CD4-positive, alpha-beta T cell (primary cell): ENCODE measurements at regions of chr12 and their contacts with region 1.

Region 1: GRCh38 chr12:116277393-116278278 is at the start of gene MED13L:
- DNase-seq: peak; percentile 77 to 95 (median 88)
- ATAC-seq: peak; percentile 81
- H3K4me3 ChIP-seq: peak within 1 kb of the TSS; percentile 92
- H3K4me3 Mint-ChIP-seq: peak within 1 kb of the TSS; percentile 95
- H3K27ac ChIP-seq: peak within 1 kb of the TSS; percentile 9 to 13
- H3K27ac Mint-ChIP-seq: peak within 1 kb of the TSS; percentile 94
- H3K4me1 ChIP-seq: peaks cover 12% of the 10 kb centered on the region
- H3K4me1 Mint-ChIP-seq: peaks cover 43% of the 10 kb centered on the region
- H3K27me3 ChIP-seq: no peaks in the 10 kb centered on the region
- H3K27me3 Mint-ChIP-seq: no peaks in the 10 kb centered on the region
- CTCF ChIP-seq: no peak
- total RNA-seq, gene MED13L: 203 to 208 TPM

Region 2: GRCh38 chr12:116180448-116180847 is 97.2 kb before region 1 on chr12:
- CTCF ChIA-PET with region 1: no interaction called
- POLR2A ChIA-PET with region 1: no interaction called
- intact Hi-C with region 1: no loop called
- DNase-seq: no peak
- ATAC-seq: no peak
- H3K4me3 ChIP-seq: no peak overlapping the region
- H3K4me3 Mint-ChIP-seq: no peak overlapping the region
- H3K27ac ChIP-seq: no peak overlapping the region
- H3K27ac Mint-ChIP-seq: no peak overlapping the region
- H3K4me1 ChIP-seq: peaks cover 7% of the 10 kb centered on the region
- H3K4me1 Mint-ChIP-seq: peaks cover 92% of the 10 kb centered on the region
- H3K27me3 ChIP-seq: no peaks in the 10 kb centered on the region
- H3K27me3 Mint-ChIP-seq: no peaks in the 10 kb centered on the region
- CTCF ChIP-seq: no peak

Region 3: DNA sequence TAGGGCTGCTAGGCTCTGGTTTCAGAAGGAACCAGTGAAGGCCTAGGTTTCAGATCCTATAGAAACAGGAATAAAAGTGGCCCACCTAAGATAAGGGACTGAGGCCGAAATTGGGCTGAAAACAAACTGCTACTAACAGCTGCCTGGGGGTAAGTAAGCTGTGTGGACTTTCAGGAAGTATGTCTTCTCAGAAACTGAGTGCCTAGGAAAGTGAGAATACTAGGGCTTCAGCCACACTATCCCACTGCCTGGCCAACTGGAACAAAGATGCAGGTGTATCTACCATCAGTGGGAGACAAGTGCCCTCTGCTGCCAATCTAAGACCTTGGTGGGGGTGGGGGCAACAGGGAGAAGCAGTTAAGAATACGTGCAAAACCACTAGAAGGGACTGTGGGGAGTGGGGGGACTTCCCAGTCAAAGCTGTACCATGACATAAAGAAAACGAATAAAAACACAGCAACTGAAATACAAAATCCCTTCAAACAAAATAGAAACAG is 82.7 kb before region 1 on chr12:
- CTCF ChIA-PET with region 1: no interaction called
- POLR2A ChIA-PET with region 1: no interaction called
- intact Hi-C with region 1: loop called in 1 of 2 experiments (anchors 5 kb)
- DNase-seq: peak in 13 of 14 experiments; percentile 3 to 85 (median 30)
- ATAC-seq: peak; percentile 95
- H3K4me3 ChIP-seq: no peak overlapping the region
- H3K4me3 Mint-ChIP-seq: peak overlapping the region; percentile 47
- H3K27ac ChIP-seq: no peak overlapping the region
- H3K27ac Mint-ChIP-seq: peak overlapping the region; percentile 40
- H3K4me1 ChIP-seq: peaks cover 21% of the 10 kb centered on the region
- H3K4me1 Mint-ChIP-seq: peaks cover 69% of the 10 kb centered on the region
- H3K27me3 ChIP-seq: no peaks in the 10 kb centered on the region
- H3K27me3 Mint-ChIP-seq: no peaks in the 10 kb centered on the region
- CTCF ChIP-seq: no peak

Region 4: GRCh38 chr12:116244001-116244400 is 33.6 kb before region 1 on chr12:
- CTCF ChIA-PET with region 1: interaction called, 6 read pairs
- POLR2A ChIA-PET with region 1: interaction called, 5 read pairs
- intact Hi-C with region 1: loop called (anchors 5 kb)
- DNase-seq: peak in 4 of 14 experiments; percentile 19 to 43 (median 29)
- ATAC-seq: peak; percentile 67
- H3K4me3 ChIP-seq: no peak overlapping the region
- H3K4me3 Mint-ChIP-seq: peak overlapping the region; percentile 35
- H3K27ac ChIP-seq: no peak overlapping the region
- H3K27ac Mint-ChIP-seq: peak overlapping the region; percentile 59
- H3K4me1 ChIP-seq: peaks cover 23% of the 10 kb centered on the region
- H3K4me1 Mint-ChIP-seq: peaks cover 92% of the 10 kb centered on the region
- H3K27me3 ChIP-seq: no peaks in the 10 kb centered on the region
- H3K27me3 Mint-ChIP-seq: no peaks in the 10 kb centered on the region
- CTCF ChIP-seq: no peak

Region 5: GRCh38 chr12:116361414-116362223 is 84.0 kb after region 1 on chr12:
- CTCF ChIA-PET with region 1: no interaction called
- POLR2A ChIA-PET with region 1: interaction called, 6 read pairs
- intact Hi-C with region 1: loop called in 1 of 2 experiments (anchors 5 kb)
- DNase-seq: peak in 3 of 14 experiments; percentile 4 to 26 (median 16)
- ATAC-seq: no peak
- H3K4me3 ChIP-seq: no peak overlapping the region
- H3K4me3 Mint-ChIP-seq: peak overlapping the region; percentile 72
- H3K27ac ChIP-seq: no peak overlapping the region
- H3K27ac Mint-ChIP-seq: peak overlapping the region; percentile 75
- H3K4me1 ChIP-seq: peaks cover 30% of the 10 kb centered on the region
- H3K4me1 Mint-ChIP-seq: peaks cover 42% of the 10 kb centered on the region
- H3K27me3 ChIP-seq: no peaks in the 10 kb centered on the region
- H3K27me3 Mint-ChIP-seq: no peaks in the 10 kb centered on the region
- CTCF ChIP-seq: no peak

Region 6: DNA sequence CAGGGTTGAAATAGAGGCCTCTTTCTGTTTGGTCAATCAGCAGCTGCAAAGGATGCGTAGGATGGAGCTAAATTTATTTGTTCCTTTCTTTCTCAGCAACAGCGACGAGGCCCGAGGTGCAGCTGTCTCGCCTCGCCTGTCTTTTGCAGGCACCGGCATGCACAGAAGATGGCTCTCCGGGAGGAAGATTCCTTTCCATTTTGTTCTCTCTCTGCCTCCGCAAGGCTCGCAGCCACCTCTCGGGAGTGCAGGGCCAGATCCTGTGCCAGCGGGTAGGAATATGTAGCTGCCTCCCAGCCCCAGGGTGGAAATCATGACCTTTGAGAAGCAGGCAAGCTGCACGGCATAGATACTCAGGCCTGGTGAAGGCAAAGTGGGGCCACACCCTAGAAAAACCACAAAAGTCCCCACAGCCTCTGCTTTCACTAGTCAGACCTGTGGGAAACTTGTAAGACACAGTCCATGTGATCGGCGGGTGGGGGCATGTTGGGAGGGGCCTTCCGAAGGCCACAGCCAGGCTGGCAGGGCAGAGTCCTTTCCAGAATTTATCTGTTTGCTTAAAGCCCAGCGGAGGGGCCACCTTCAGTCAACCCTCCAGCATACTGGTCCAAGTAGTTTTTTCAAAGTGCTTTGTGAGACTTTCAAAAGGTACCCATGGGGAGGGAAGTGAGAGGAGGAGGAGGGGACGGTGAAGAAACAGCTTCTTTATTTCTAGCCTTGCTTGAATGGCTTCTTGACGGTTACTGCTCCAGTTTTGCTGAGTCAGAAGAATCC is 281.7 kb after region 1 on chr12 and contains the start of gene MAP1LC3B2:
- CTCF ChIA-PET with region 1: no interaction called
- POLR2A ChIA-PET with region 1: interaction called, 12 read pairs
- intact Hi-C with region 1: no loop called
- DNase-seq: peak; percentile 53 to 92 (median 66)
- ATAC-seq: peak; percentile 79
- H3K4me3 ChIP-seq: peak within 1 kb of the TSS; percentile 43
- H3K4me3 Mint-ChIP-seq: peak within 1 kb of the TSS; percentile 90
- H3K27ac ChIP-seq: peak within 1 kb of the TSS; percentile 59 to 79
- H3K27ac Mint-ChIP-seq: peak within 1 kb of the TSS; percentile 97
- H3K4me1 ChIP-seq: peaks cover 49% of the 10 kb centered on the region
- H3K4me1 Mint-ChIP-seq: peaks cover 61% of the 10 kb centered on the region
- H3K27me3 ChIP-seq: no peaks in the 10 kb centered on the region
- H3K27me3 Mint-ChIP-seq: no peaks in the 10 kb centered on the region
- CTCF ChIP-seq: no peak
- total RNA-seq, gene MAP1LC3B2: 1.5 to 2.1 TPM

Region 7: GRCh38 chr12:116737774-116738700 is 460.4 kb after region 1 on chr12 and contains the starts of genes RNFT2 and SPRING1:
- CTCF ChIA-PET with region 1: no interaction called
- POLR2A ChIA-PET with region 1: no interaction called
- intact Hi-C with region 1: loop called in 1 of 2 experiments (anchors 5 kb)
- DNase-seq: peak; percentile 96 to 100 (median 98)
- ATAC-seq: peak; percentile 96
- H3K4me3 ChIP-seq: peak within 1 kb of the TSS; percentile 87
- H3K4me3 Mint-ChIP-seq: peak within 1 kb of the TSS; percentile 96
- H3K27ac ChIP-seq: peak within 1 kb of the TSS; percentile 27 to 39
- H3K27ac Mint-ChIP-seq: peak within 1 kb of the TSS; percentile 86
- H3K4me1 ChIP-seq: peaks cover 27% of the 10 kb centered on the region
- H3K4me1 Mint-ChIP-seq: peaks cover 35% of the 10 kb centered on the region
- H3K27me3 ChIP-seq: no peaks in the 10 kb centered on the region
- H3K27me3 Mint-ChIP-seq: no peaks in the 10 kb centered on the region
- CTCF ChIP-seq: no peak
- total RNA-seq, gene RNFT2: 4.9 to 6.0 TPM
- total RNA-seq, gene SPRING1: 7.6 to 7.8 TPM